K562 (cell line): ENCODE measurements at regions of chr9 and their contacts with region 1.

Region 1: GRCh38 chr9:94213511-94214124 is 45.5 kb upstream of the ZNF169 start:
- DNase-seq: peak; percentile 82 to 89 (median 84)
- ATAC-seq: peak; percentile 98
- H3K4me3 ChIP-seq: no peak overlapping the region
- H3K27ac ChIP-seq: no peak overlapping the region
- H3K4me1 ChIP-seq: peaks cover 0 to 11% of the 10 kb centered on the region in 2 experiments; a peak in 2 of 5 replicates
- H3K27me3 ChIP-seq: no peaks in the 10 kb centered on the region; a peak in 2 of 5 replicates
- CTCF ChIP-seq: peak; percentile 83 to 91 (median 91)
- EP300 ChIP-seq: no peak
- POLR2A ChIP-seq: no peak
- RAD21 ChIP-seq: peak; percentile 97 to 99

Region 2: GRCh38 chr9:93682232-93682968 is 531.2 kb before region 1 on chr9:
- CTCF ChIA-PET with region 1: interaction called, 10 read pairs
- POLR2A ChIA-PET with region 1: no interaction called
- in situ Hi-C with region 1: loop called (anchors 25 kb)
- intact Hi-C with region 1: loop called (anchors 5 kb)
- DNase-seq: peak; percentile 72 to 79 (median 78)
- ATAC-seq: peak; percentile 88
- H3K4me3 ChIP-seq: no peak overlapping the region
- H3K27ac ChIP-seq: no peak overlapping the region
- H3K4me1 ChIP-seq: peaks cover 0 to 18% of the 10 kb centered on the region in 2 experiments; a peak in 1 of 5 replicates
- H3K27me3 ChIP-seq: no peaks in the 10 kb centered on the region
- CTCF ChIP-seq: peak; percentile 84 to 88 (median 86)
- EP300 ChIP-seq: no peak
- POLR2A ChIP-seq: no peak
- RAD21 ChIP-seq: peak; percentile 83 to 89

Region 3: DNA sequence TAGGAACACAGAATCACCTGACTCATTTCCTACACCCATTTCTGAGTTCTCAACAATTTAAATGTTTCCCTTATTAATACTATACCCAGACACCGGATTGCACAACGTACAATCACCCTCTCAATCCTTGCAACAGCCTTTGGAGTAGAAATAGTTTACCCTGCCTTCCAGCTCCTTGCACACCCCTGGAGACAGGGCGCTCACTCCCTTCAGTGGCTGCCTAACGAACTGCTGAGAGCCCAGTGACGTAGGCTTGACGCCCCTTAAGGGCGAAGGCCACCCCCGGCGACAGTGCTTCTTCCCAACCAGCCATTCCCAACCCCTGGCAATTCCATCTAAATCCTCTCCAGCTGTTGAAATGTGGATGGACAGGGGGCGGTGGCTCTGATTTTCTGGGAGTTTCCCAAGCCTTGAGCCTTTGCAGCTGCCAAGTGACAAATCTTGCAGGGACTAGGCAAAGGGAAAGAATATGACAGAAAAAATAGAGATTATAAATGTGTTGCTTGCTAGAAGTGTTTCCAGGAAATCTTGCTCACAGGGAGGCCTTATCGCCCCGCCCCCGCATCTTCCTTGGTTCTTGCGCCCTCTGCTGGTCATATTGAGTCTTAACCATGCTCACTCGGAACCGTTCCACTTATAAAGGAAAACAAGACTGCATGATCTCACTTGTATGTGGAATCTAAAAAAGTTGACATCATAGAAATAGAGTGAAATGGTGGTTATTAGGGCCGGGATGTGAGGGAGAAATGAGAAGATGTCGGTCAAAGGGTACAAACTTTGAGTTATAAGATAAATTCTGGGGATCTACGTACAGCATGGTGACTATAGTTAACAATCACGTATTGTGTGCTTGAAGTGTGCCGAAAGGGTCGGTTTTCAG is 250.8 kb before region 1 on chr9:
- CTCF ChIA-PET with region 1: no interaction called
- POLR2A ChIA-PET with region 1: no interaction called
- in situ Hi-C with region 1: no loop called
- intact Hi-C with region 1: loop called (anchors 5 kb)
- DNase-seq: peak; percentile 88 to 91 (median 90)
- ATAC-seq: peak; percentile 93
- H3K4me3 ChIP-seq: no peak overlapping the region
- H3K27ac ChIP-seq: no peak overlapping the region
- H3K4me1 ChIP-seq: peaks cover 5 to 27% of the 10 kb centered on the region in 2 experiments; a peak in 4 of 5 replicates
- H3K27me3 ChIP-seq: peaks cover 19 to 47% of the 10 kb centered on the region in 2 experiments; a peak in 4 of 5 replicates
- CTCF ChIP-seq: peak; percentile 84 to 90 (median 85)
- EP300 ChIP-seq: peak; percentile 48
- POLR2A ChIP-seq: no peak
- RAD21 ChIP-seq: peak; percentile 69 to 90

Region 4: GRCh38 chr9:94014065-94014654 is 199.5 kb before region 1 on chr9:
- CTCF ChIA-PET with region 1: interaction called, 30 read pairs
- POLR2A ChIA-PET with region 1: interaction called, 5 read pairs
- in situ Hi-C with region 1: loop called (anchors 5 kb)
- intact Hi-C with region 1: loop called (anchors 1 kb)
- DNase-seq: peak; percentile 44 to 50 (median 48)
- ATAC-seq: peak; percentile 78
- H3K4me3 ChIP-seq: no peak overlapping the region
- H3K27ac ChIP-seq: no peak overlapping the region
- H3K4me1 ChIP-seq: no peaks in the 10 kb centered on the region
- H3K27me3 ChIP-seq: peaks cover 0 to 9% of the 10 kb centered on the region in 2 experiments; a peak in 4 of 5 replicates
- CTCF ChIP-seq: peak; percentile 47 to 65 (median 56)
- EP300 ChIP-seq: no peak
- POLR2A ChIP-seq: no peak
- RAD21 ChIP-seq: peak; percentile 43 to 79

Region 5: DNA sequence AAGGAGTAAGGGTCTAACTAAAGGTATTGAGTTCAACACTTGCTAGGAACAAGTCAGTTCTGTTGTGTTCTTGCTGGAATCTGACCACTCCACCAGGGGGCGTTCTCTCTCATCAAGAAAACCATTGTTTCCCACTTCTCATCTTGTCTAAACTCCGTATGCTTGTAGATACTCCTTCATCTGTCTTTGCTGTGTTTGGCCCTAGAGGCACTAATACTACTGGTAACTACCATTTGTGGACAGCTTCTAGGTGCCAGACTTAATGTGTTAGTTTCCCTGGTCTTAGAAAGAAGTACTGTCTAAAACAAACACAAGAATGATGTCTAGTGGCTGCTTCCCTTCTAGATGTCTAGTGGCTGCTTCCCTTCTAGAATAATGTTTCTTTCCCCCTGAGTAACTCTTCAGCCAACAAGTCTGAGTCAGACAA is 148.1 kb before region 1 on chr9:
- CTCF ChIA-PET with region 1: interaction called, 40 read pairs
- POLR2A ChIA-PET with region 1: interaction called, 3 read pairs
- in situ Hi-C with region 1: loop called (anchors 5 kb)
- intact Hi-C with region 1: loop called (anchors 1 kb)
- DNase-seq: peak; percentile 44 to 88 (median 54)
- ATAC-seq: peak; percentile 95
- H3K4me3 ChIP-seq: no peak overlapping the region
- H3K27ac ChIP-seq: no peak overlapping the region
- H3K4me1 ChIP-seq: peaks cover 0 to 5% of the 10 kb centered on the region in 2 experiments; a peak in 2 of 5 replicates
- H3K27me3 ChIP-seq: no peaks in the 10 kb centered on the region; a peak in 1 of 5 replicates
- CTCF ChIP-seq: peak; percentile 78 to 88 (median 84)
- EP300 ChIP-seq: no peak
- POLR2A ChIP-seq: no peak
- RAD21 ChIP-seq: peak; percentile 83 to 96

Region 6: GRCh38 chr9:94166237-94166963 is 47.2 kb before region 1 on chr9:
- CTCF ChIA-PET with region 1: no interaction called
- POLR2A ChIA-PET with region 1: no interaction called
- in situ Hi-C with region 1: no loop called
- intact Hi-C with region 1: loop called (anchors 2 kb)
- DNase-seq: peak; percentile 87 to 99 (median 92)
- ATAC-seq: peak; percentile 68
- H3K4me3 ChIP-seq: peak overlapping the region; percentile 68
- H3K27ac ChIP-seq: peak overlapping the region; percentile 99
- H3K4me1 ChIP-seq: peaks cover 7 to 17% of the 10 kb centered on the region in 2 experiments; a peak in 4 of 5 replicates
- H3K27me3 ChIP-seq: no peaks in the 10 kb centered on the region
- CTCF ChIP-seq: peak in 2 of 3 experiments; percentile 25 to 27; a peak in 1 of 6 replicates
- EP300 ChIP-seq: no peak; the same call in 1 of the 2 replicates
- POLR2A ChIP-seq: peak; percentile 24
- RAD21 ChIP-seq: no peak

Region 7: GRCh38 chr9:94228616-94229015 is 15.0 kb after region 1 on chr9:
- CTCF ChIA-PET with region 1: no interaction called
- POLR2A ChIA-PET with region 1: no interaction called
- in situ Hi-C with region 1: no loop called
- intact Hi-C with region 1: no loop called
- DNase-seq: no peak
- ATAC-seq: no peak
- H3K4me3 ChIP-seq: no peak overlapping the region
- H3K27ac ChIP-seq: no peak overlapping the region
- H3K4me1 ChIP-seq: no peaks in the 10 kb centered on the region
- H3K27me3 ChIP-seq: no peaks in the 10 kb centered on the region
- CTCF ChIP-seq: no peak
- EP300 ChIP-seq: no peak
- POLR2A ChIP-seq: no peak
- RAD21 ChIP-seq: no peak

Region 8: DNA sequence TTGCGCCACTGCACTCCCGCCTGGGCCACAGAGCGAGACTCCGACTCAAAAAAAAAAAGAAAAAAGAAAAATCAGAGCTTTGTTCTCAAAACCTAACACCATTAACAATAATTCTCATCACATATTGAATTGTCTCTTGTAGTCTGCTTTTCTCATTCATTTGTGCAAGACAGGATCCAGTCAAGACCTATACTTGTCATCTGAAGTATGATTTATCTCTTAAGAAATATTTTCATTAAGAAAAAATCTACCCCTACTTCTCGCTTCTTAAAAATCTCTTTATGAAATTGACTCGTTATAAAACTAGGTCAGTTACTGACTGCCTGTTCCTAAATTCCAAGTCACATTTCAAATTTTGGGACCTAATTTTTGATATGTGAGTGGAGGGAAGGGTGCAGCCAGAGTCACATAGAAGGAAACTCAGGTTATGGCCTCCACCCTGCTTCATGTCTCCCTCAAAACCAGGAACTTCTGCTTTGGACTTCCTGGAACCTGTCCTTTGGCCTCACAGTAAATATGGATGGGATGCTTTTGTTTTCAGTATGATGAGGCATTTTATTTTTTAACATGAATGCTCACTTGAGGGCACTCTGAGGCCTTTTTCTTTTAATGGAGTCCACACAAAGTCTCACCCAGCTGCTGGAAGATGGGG is 64.4 kb after region 1 on chr9:
- CTCF ChIA-PET with region 1: no interaction called
- POLR2A ChIA-PET with region 1: no interaction called
- in situ Hi-C with region 1: no loop called
- intact Hi-C with region 1: no loop called
- DNase-seq: peak in 2 of 4 experiments; percentile 13 to 33
- ATAC-seq: peak; percentile 53
- H3K4me3 ChIP-seq: no peak overlapping the region
- H3K27ac ChIP-seq: peak overlapping the region; percentile 77
- H3K4me1 ChIP-seq: peaks cover 16 to 31% of the 10 kb centered on the region in 2 experiments
- H3K27me3 ChIP-seq: no peaks in the 10 kb centered on the region
- CTCF ChIP-seq: no peak; a peak in 1 of 6 replicates
- EP300 ChIP-seq: no peak
- POLR2A ChIP-seq: no peak
- RAD21 ChIP-seq: peak in 1 of 2 experiments; percentile 30; a peak in 1 of 4 replicates

Region 9: GRCh38 chr9:94534901-94535300 is 321.3 kb after region 1 on chr9:
- CTCF ChIA-PET with region 1: no interaction called
- POLR2A ChIA-PET with region 1: no interaction called
- in situ Hi-C with region 1: no loop called
- intact Hi-C with region 1: loop called (anchors 5 kb)
- DNase-seq: no peak
- ATAC-seq: no peak
- H3K4me3 ChIP-seq: no peak overlapping the region
- H3K27ac ChIP-seq: no peak overlapping the region
- H3K4me1 ChIP-seq: no peaks in the 10 kb centered on the region
- H3K27me3 ChIP-seq: peaks cover 2 to 4% of the 10 kb centered on the region in 2 experiments; a peak in 3 of 5 replicates
- CTCF ChIP-seq: no peak
- EP300 ChIP-seq: no peak
- POLR2A ChIP-seq: no peak
- RAD21 ChIP-seq: no peak